CD4-positive, alpha-beta memory T cell (primary cell): ENCODE measurements at regions of chr6 and their contacts with region 1.

Region 1: DNA sequence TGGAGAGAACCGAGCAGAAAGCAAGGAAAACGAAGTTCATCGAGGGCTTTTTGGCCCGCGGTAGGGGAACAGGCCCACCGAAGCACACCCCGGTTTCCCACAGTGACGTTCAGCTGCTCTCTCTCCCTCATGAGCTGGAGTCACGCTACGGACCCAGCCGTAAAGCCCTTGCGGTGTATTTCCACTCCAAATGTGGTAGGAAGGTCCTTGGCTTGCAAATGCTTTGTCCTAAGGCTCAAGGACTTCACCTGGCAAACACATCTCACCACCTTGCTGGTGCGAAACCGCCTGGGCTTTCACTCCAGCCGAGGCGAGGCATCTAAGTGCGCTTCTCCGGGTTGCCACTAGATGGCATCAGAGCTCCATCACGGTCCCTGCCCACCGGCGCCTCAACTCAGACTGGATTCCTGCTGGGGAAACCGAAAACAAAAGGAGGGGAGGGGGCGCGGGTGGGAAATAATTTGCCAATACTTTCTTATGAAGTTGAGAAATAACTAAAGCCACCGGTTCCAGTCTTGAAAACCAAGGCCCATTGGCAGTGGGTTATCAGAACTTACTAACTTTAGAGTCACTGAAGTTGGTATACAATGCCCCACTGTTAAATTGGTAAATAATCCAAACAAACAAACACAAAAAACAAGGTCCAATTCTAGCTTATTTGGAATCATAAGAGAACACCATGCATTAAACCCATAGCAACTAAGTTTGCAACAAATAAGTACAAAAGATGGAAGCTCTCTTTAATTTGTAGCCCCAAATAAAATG is 13.4 kb upstream of the FOXC1 start:
- DNase-seq: peak in 4 of 5 donors; percentile 59 to 68 (median 63)
- H3K4me3 ChIP-seq: no peak overlapping the region
- H3K4me3 Mint-ChIP-seq: peak overlapping the region in 2 of 8 donors; percentile 32 to 39
- H3K27ac ChIP-seq: no peak overlapping the region
- H3K27ac Mint-ChIP-seq: peak overlapping the region in 1 of 7 donors; percentile 59
- H3K4me1 ChIP-seq: peaks cover 5% of the 10 kb centered on the region
- H3K4me1 Mint-ChIP-seq: peaks cover 0 to 4% (median 3%) of the 10 kb centered on the region in 4 donors
- H3K27me3 ChIP-seq: peaks cover 32% of the 10 kb centered on the region
- H3K27me3 Mint-ChIP-seq: peaks cover 52 to 58% of the 10 kb centered on the region in 2 donors

Region 2: DNA sequence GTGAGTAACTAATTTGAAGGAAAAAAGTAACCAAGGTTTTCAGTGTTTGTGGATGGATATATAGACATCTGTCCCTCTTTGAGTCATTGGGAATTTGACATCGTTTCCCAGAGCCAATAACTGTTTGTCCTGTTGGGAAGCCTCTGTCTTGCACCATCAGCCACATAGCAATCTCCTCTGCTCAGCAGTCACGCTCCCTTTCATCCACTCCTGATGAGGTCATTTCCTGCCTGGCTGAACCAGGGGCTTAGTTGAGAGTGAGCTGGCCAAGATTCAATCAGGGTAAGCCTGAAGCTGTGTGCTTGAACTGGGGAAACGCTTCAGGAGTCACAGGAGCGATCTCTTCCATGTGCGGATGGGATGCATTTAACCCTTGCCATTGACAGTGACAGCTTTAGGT is 405.9 kb before region 1 on chr6:
- CTCF ChIA-PET with region 1: no interaction called
- POLR2A ChIA-PET with region 1: no interaction called
- intact Hi-C with region 1: no loop called
- DNase-seq: no peak
- H3K4me3 ChIP-seq: no peak overlapping the region
- H3K4me3 Mint-ChIP-seq: no peak overlapping the region
- H3K27ac ChIP-seq: no peak overlapping the region
- H3K27ac Mint-ChIP-seq: no peak overlapping the region
- H3K4me1 ChIP-seq: no peaks in the 10 kb centered on the region
- H3K4me1 Mint-ChIP-seq: no peaks in the 10 kb centered on the region
- H3K27me3 ChIP-seq: no peaks in the 10 kb centered on the region
- H3K27me3 Mint-ChIP-seq: peaks cover 0 to 1% of the 10 kb centered on the region in 2 donors

Region 3: GRCh38 chr6:1390133-1390804 is 206.0 kb before region 1 on chr6:
- CTCF ChIA-PET with region 1: no interaction called
- POLR2A ChIA-PET with region 1: no interaction called
- intact Hi-C with region 1: no loop called
- DNase-seq: no peak
- H3K4me3 ChIP-seq: no peak overlapping the region
- H3K4me3 Mint-ChIP-seq: peak overlapping the region in 7 of 8 donors; percentile 50 to 85 (median 76)
- H3K27ac ChIP-seq: no peak overlapping the region
- H3K27ac Mint-ChIP-seq: no peak overlapping the region
- H3K4me1 ChIP-seq: peaks cover 10% of the 10 kb centered on the region
- H3K4me1 Mint-ChIP-seq: peaks cover 10 to 44% (median 27%) of the 10 kb centered on the region in 4 donors
- H3K27me3 ChIP-seq: peaks cover 45% of the 10 kb centered on the region
- H3K27me3 Mint-ChIP-seq: peaks cover 60 to 62% of the 10 kb centered on the region in 2 donors

Region 4: GRCh38 chr6:1524040-1524480 is 72.2 kb before region 1 on chr6:
- CTCF ChIA-PET with region 1: interaction called, 38 read pairs
- POLR2A ChIA-PET with region 1: interaction called, 3 read pairs
- intact Hi-C with region 1: loop called (anchors 2 kb)
- DNase-seq: peak; percentile 75 to 83 (median 77)
- H3K4me3 ChIP-seq: peak overlapping the region in 1 of 2 donors; percentile 20
- H3K4me3 Mint-ChIP-seq: peak overlapping the region; percentile 75 to 83 (median 80)
- H3K27ac ChIP-seq: peak overlapping the region; percentile 36
- H3K27ac Mint-ChIP-seq: peak overlapping the region; percentile 78 to 93 (median 85)
- H3K4me1 ChIP-seq: peaks cover 51% of the 10 kb centered on the region
- H3K4me1 Mint-ChIP-seq: peaks cover 27 to 55% (median 49%) of the 10 kb centered on the region in 4 donors
- H3K27me3 ChIP-seq: no peaks in the 10 kb centered on the region
- H3K27me3 Mint-ChIP-seq: peaks cover 10% of the 10 kb centered on the region in 2 donors

Region 5: GRCh38 chr6:1535295-1535694 is 61.0 kb before region 1 on chr6:
- CTCF ChIA-PET with region 1: no interaction called
- POLR2A ChIA-PET with region 1: no interaction called
- intact Hi-C with region 1: no loop called
- DNase-seq: peak; percentile 25 to 59 (median 44)
- H3K4me3 ChIP-seq: no peak overlapping the region
- H3K4me3 Mint-ChIP-seq: peak overlapping the region in 7 of 8 donors; percentile 50 to 83 (median 76)
- H3K27ac ChIP-seq: peak overlapping the region; percentile 19
- H3K27ac Mint-ChIP-seq: peak overlapping the region; percentile 28 to 92 (median 66)
- H3K4me1 ChIP-seq: peaks cover 49% of the 10 kb centered on the region
- H3K4me1 Mint-ChIP-seq: peaks cover 16 to 25% (median 18%) of the 10 kb centered on the region in 4 donors
- H3K27me3 ChIP-seq: no peaks in the 10 kb centered on the region
- H3K27me3 Mint-ChIP-seq: no peaks in the 10 kb centered on the region

Region 6: DNA sequence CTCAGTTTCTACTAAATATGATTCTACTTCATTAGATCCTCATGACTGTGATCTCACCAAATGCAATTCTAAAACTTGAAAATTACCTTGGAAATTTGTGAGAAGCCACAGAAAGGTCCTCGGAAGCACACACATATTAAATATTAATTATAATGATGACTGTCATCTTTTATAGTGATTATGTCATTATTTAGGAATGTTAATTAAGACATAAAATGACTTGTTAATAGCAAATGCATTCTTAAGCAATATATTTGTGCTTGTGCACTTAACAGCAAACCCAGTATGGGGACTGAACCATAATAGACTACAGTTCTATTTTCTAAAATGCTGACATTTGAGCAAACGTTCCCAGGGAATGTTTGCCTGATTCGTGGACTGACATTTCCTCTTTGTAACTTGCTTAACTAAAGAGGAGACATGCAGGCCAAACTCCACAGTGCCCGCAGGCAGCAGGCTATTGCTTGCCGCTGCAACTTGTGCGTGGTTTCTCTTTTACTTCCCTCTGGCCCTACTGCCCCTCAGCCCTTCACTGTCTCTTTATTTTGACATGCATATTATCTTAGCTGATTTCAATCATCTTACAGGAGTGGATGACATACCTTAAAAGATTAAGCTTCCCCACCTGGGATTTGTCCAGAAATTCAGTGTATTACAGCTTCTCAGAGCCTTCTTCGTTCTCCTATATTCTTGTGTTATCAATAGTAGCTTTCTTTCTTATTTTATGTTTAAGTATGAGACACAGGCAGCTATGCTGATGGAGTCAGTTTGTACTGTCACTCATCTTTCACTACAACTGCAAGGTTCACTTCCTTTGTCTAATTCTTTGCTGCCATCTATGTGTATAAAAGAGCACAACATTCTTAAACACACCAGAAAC is 507.6 kb after region 1 on chr6:
- CTCF ChIA-PET with region 1: interaction called, 38 read pairs
- POLR2A ChIA-PET with region 1: no interaction called
- intact Hi-C with region 1: no loop called
- DNase-seq: peak in 4 of 5 donors; percentile 20 to 31 (median 30)
- H3K4me3 ChIP-seq: no peak overlapping the region
- H3K4me3 Mint-ChIP-seq: no peak overlapping the region
- H3K27ac ChIP-seq: no peak overlapping the region
- H3K27ac Mint-ChIP-seq: no peak overlapping the region
- H3K4me1 ChIP-seq: no peaks in the 10 kb centered on the region
- H3K4me1 Mint-ChIP-seq: no peaks in the 10 kb centered on the region
- H3K27me3 ChIP-seq: no peaks in the 10 kb centered on the region
- H3K27me3 Mint-ChIP-seq: no peaks in the 10 kb centered on the region

Region 7: GRCh38 chr6:2196079-2196679 is 599.9 kb after region 1 on chr6:
- CTCF ChIA-PET with region 1: interaction called, 35 read pairs
- POLR2A ChIA-PET with region 1: no interaction called
- intact Hi-C with region 1: loop called (anchors 1 kb)
- DNase-seq: peak in 4 of 5 donors; percentile 24 to 44 (median 37)
- H3K4me3 ChIP-seq: no peak overlapping the region
- H3K4me3 Mint-ChIP-seq: no peak overlapping the region
- H3K27ac ChIP-seq: no peak overlapping the region
- H3K27ac Mint-ChIP-seq: no peak overlapping the region
- H3K4me1 ChIP-seq: no peaks in the 10 kb centered on the region
- H3K4me1 Mint-ChIP-seq: peaks cover 0 to 2% (median 0%) of the 10 kb centered on the region in 4 donors
- H3K27me3 ChIP-seq: no peaks in the 10 kb centered on the region
- H3K27me3 Mint-ChIP-seq: no peaks in the 10 kb centered on the region

Region 8: GRCh38 chr6:2542858-2543218 is 946.6 kb after region 1 on chr6:
- CTCF ChIA-PET with region 1: no interaction called
- POLR2A ChIA-PET with region 1: no interaction called
- intact Hi-C with region 1: loop called (anchors 10 kb)
- DNase-seq: peak; percentile 64 to 80 (median 71)
- H3K4me3 ChIP-seq: peak overlapping the region in 1 of 2 donors; percentile 5
- H3K4me3 Mint-ChIP-seq: peak overlapping the region in 7 of 8 donors; percentile 40 to 70 (median 62)
- H3K27ac ChIP-seq: no peak overlapping the region
- H3K27ac Mint-ChIP-seq: peak overlapping the region in 6 of 7 donors; percentile 4 to 86 (median 44)
- H3K4me1 ChIP-seq: peaks cover 25% of the 10 kb centered on the region
- H3K4me1 Mint-ChIP-seq: peaks cover 19 to 30% (median 26%) of the 10 kb centered on the region in 4 donors
- H3K27me3 ChIP-seq: peaks cover 3% of the 10 kb centered on the region
- H3K27me3 Mint-ChIP-seq: peaks cover 30 to 47% of the 10 kb centered on the region in 2 donors

Region 9: GRCh38 chr6:2749969-2750600 is 1153.8 kb after region 1 on chr6:
- CTCF ChIA-PET with region 1: interaction called, 38 read pairs
- POLR2A ChIA-PET with region 1: no interaction called
- intact Hi-C with region 1: loop called (anchors 1 kb)
- DNase-seq: peak; percentile 52 to 63 (median 56)
- H3K4me3 ChIP-seq: no peak overlapping the region
- H3K4me3 Mint-ChIP-seq: no peak overlapping the region
- H3K27ac ChIP-seq: no peak overlapping the region
- H3K27ac Mint-ChIP-seq: peak overlapping the region in 1 of 7 donors; percentile 35
- H3K4me1 ChIP-seq: no peaks in the 10 kb centered on the region
- H3K4me1 Mint-ChIP-seq: peaks cover 0 to 2% (median under 1%) of the 10 kb centered on the region in 4 donors
- H3K27me3 ChIP-seq: peaks cover 7% of the 10 kb centered on the region
- H3K27me3 Mint-ChIP-seq: peaks cover 13 to 21% of the 10 kb centered on the region in 2 donors